Activated CD4-positive, alpha-beta T cell treated with anti-CD3 and anti-CD28 coated beads for 36 hours (primary cell): ENCODE measurements at regions of chr10 and their contacts with region 1.

Region 1: DNA sequence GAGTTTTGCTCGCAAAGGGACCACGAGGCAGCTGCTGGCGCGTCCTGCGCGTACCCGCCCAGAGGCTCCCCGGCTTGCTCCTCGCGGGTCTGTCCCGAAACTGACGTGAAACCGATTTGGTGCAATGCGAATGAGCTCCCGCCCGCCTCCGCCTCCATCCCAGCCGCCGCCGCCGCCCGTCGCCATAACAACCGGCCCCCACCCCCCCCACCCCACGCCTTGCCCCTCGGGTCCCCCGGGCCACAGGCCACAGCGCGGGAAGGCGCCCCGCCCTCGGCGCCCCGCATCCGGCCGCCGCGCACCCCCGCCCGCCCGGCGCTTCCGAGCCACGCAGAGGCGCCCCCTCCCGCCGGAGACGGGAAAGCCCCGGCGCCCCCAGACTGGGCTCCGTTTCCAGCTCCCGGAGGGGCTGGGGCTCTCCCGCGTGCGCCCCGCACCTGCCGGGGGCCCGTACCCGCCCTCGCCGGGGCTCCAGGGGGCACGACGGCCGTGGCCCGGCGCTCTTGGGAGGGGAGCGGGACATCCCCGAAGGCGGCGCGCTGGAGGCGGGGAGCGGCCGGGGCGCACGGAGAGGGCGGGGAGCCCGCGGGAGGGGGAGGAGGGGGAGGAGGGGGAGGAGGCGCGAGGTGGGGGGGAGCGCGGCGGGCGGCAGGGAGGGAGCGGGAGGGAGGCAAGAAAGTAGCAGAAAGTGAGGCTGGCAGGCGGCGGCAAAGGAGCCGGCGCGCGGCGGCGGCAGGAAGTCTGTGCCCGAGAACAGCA is at the start of gene CAMK1D:
- DNase-seq: peak; percentile 92
- ATAC-seq: peak; percentile 56
- H3K4me3 Mint-ChIP-seq: peak within 1 kb of the TSS; percentile 90
- H3K27ac Mint-ChIP-seq: peak within 1 kb of the TSS; percentile 95
- H3K4me1 Mint-ChIP-seq: peaks cover 42% of the 10 kb centered on the region
- H3K27me3 Mint-ChIP-seq: peaks cover 4% of the 10 kb centered on the region
- total RNA-seq, gene CAMK1D: 16.0 to 16.3 TPM

Region 2: GRCh38 chr10:12121673-12122072 is 227.4 kb before region 1 on chr10:
- CTCF ChIA-PET with region 1: no interaction called
- POLR2A ChIA-PET with region 1: no interaction called
- intact Hi-C with region 1: loop called in 1 of 2 experiments (anchors 5 kb)
- DNase-seq: no peak
- ATAC-seq: no peak
- H3K4me3 Mint-ChIP-seq: peak overlapping the region; percentile 54
- H3K27ac Mint-ChIP-seq: peak overlapping the region; percentile 94
- H3K4me1 Mint-ChIP-seq: peaks cover 32% of the 10 kb centered on the region
- H3K27me3 Mint-ChIP-seq: no peaks in the 10 kb centered on the region

Region 3: DNA sequence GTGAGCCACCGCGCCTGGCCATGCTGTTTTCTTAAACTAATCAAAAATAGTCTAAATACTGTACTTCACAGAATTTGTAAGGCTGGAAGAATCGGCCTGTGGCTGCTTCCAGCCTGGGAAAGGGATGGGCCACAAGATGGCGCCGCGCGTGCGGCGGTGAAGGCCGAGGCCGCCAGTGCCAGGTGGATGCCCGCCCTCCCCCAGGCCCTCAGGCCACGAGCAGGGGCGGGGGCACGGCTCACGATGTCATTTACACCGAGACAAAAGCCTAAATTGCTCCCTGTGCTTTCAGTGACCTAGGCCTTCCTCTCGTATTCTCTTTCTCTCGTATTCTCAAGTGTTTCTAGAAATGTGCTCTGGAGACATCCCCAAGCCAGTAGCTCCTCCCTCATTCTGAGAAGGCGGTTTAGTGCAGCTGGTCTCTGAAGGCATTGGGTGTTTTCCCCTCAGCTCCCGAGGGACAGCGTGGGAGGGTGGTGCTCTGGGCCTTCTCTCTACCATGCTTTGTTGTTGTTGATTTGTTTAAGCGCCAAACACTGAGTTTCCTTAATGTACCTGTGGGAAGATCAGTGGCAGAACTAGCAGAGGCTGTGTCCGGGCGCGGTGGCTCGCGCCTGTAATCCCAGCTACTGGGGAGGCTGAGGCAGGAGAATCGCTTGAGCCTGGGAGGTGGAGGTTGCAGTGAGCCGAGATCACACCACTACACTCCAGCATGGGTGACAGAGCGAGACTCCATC is 84.7 kb before region 1 on chr10:
- CTCF ChIA-PET with region 1: no interaction called
- POLR2A ChIA-PET with region 1: no interaction called
- intact Hi-C with region 1: loop called (anchors 1 to 2 kb)
- DNase-seq: peak; percentile 88
- ATAC-seq: peak; percentile 93
- H3K4me3 Mint-ChIP-seq: peak overlapping the region; percentile 42
- H3K27ac Mint-ChIP-seq: peak overlapping the region; percentile 83
- H3K4me1 Mint-ChIP-seq: peaks cover 17% of the 10 kb centered on the region
- H3K27me3 Mint-ChIP-seq: no peaks in the 10 kb centered on the region

Region 4: GRCh38 chr10:12319076-12319475 is 30.0 kb before region 1 on chr10:
- CTCF ChIA-PET with region 1: no interaction called
- POLR2A ChIA-PET with region 1: no interaction called
- intact Hi-C with region 1: no loop called
- DNase-seq: no peak
- ATAC-seq: no peak
- H3K4me3 Mint-ChIP-seq: no peak overlapping the region
- H3K27ac Mint-ChIP-seq: no peak overlapping the region
- H3K4me1 Mint-ChIP-seq: peaks cover 5% of the 10 kb centered on the region
- H3K27me3 Mint-ChIP-seq: no peaks in the 10 kb centered on the region

Region 5: GRCh38 chr10:12381536-12382156 is 32.6 kb after region 1 on chr10:
- CTCF ChIA-PET with region 1: no interaction called
- POLR2A ChIA-PET with region 1: no interaction called
- intact Hi-C with region 1: loop called in 1 of 2 experiments (anchors 1 kb)
- DNase-seq: no peak
- ATAC-seq: peak; percentile 73
- H3K4me3 Mint-ChIP-seq: no peak overlapping the region
- H3K27ac Mint-ChIP-seq: peak overlapping the region; percentile 86
- H3K4me1 Mint-ChIP-seq: peaks cover 33% of the 10 kb centered on the region
- H3K27me3 Mint-ChIP-seq: no peaks in the 10 kb centered on the region

Region 6: GRCh38 chr10:12448729-12449391 is 99.8 kb after region 1 on chr10:
- CTCF ChIA-PET with region 1: no interaction called
- POLR2A ChIA-PET with region 1: no interaction called
- intact Hi-C with region 1: loop called (anchors 1 kb)
- DNase-seq: peak; percentile 86
- ATAC-seq: peak; percentile 94
- H3K4me3 Mint-ChIP-seq: peak overlapping the region; percentile 68
- H3K27ac Mint-ChIP-seq: peak overlapping the region; percentile 92
- H3K4me1 Mint-ChIP-seq: peaks cover 43% of the 10 kb centered on the region
- H3K27me3 Mint-ChIP-seq: no peaks in the 10 kb centered on the region

Region 7: DNA sequence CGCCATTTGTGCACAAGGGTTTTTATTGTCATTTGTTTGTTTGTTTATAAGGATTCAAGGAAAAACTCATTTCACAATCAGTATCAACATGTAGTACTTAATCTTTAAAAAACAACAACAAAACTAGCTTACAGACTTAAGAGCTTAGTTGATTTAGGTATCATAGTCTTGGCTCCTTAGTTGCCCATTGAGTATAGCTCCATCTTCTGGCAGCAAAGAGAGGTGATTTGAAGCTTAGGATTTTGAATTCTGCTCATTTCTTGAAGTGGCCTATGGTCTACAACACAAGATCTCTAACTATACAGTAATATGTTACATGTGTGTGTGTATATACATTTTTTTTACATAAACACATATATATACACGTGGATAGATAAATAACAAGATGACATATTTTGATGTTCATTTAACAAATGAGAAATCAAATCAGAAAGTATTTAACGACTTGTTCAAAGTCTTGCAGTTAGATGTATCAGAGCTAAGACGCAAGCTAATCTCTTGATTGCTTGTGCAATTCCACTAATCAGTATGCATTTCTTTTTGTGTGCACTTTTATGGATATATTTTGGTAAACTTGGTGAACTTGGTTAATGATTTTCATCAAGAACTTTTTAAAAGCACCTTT is 307.6 kb after region 1 on chr10:
- CTCF ChIA-PET with region 1: interaction called, 5 read pairs
- POLR2A ChIA-PET with region 1: no interaction called
- intact Hi-C with region 1: loop called in 1 of 2 experiments (anchors 1 kb)
- DNase-seq: no peak
- ATAC-seq: peak; percentile 75
- H3K4me3 Mint-ChIP-seq: no peak overlapping the region
- H3K27ac Mint-ChIP-seq: no peak overlapping the region
- H3K4me1 Mint-ChIP-seq: peaks cover 27% of the 10 kb centered on the region
- H3K27me3 Mint-ChIP-seq: no peaks in the 10 kb centered on the region

Region 8: DNA sequence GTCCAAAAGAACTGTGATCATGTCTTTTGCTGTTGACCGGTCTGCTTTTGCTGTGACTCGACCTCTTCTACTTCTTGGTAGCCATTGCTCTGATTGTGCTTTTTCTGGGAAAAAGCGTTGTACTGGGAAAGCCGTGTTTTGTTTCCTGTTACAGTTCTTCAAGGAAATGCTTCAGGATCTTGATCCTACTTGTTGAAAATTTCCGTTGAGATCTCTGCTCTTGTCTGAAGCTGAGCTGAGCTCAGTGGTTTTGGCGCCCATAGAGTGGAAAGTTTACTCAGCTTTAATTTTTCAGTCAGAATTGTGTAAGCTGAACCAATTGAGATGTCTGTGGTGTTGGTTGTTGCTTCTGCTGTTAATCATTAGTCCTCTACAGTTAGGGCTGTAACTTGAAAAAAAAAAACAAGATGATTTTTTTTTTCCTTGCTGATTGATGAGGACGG is 350.2 kb after region 1 on chr10:
- CTCF ChIA-PET with region 1: no interaction called
- POLR2A ChIA-PET with region 1: no interaction called
- intact Hi-C with region 1: no loop called
- DNase-seq: peak; percentile 56
- ATAC-seq: peak; percentile 78
- H3K4me3 Mint-ChIP-seq: no peak overlapping the region
- H3K27ac Mint-ChIP-seq: peak overlapping the region; percentile 80
- H3K4me1 Mint-ChIP-seq: peaks cover 43% of the 10 kb centered on the region
- H3K27me3 Mint-ChIP-seq: no peaks in the 10 kb centered on the region

Region 9: DNA sequence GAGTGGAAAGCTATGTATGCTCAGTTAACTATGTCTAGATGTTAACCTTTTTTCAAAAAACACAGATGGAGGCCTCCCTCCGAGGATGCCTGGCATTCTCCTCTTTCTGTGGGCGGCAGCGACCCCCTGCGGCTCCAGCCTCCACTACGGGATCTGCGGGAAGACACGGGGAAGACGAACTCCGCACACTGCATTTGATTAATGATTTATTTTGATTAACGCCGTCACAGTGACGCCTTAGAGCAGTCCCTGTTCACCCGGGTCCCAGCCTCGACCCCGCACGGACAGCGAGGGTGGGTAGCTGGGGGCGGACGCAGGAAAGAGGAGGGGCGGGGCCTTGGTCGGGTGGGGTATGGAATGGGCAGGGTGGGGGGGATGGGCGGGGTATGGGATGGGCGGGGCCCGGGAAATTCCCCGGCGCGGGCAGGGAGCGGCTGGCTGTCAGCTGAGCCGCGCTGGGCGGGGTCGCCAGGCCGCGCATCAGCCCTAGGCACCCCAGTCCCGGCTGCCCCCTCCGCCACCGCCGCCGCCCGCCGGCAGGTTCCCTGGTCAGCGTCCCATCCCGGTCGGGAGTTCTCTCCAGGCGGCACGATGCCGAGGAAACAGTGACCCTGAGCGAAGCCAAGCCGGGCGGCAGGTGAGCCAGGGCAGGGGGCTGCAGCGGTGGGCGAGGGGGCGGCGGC is 750.8 kb after region 1 on chr10 and contains the start of gene OPTN:
- CTCF ChIA-PET with region 1: no interaction called
- POLR2A ChIA-PET with region 1: no interaction called
- intact Hi-C with region 1: loop called in 1 of 2 experiments (anchors 1 kb)
- DNase-seq: peak; percentile 87
- ATAC-seq: peak; percentile 80
- H3K4me3 Mint-ChIP-seq: peak within 1 kb of the TSS; percentile 84
- H3K27ac Mint-ChIP-seq: peak within 1 kb of the TSS; percentile 90
- H3K4me1 Mint-ChIP-seq: peaks cover 37% of the 10 kb centered on the region
- H3K27me3 Mint-ChIP-seq: no peaks in the 10 kb centered on the region
- total RNA-seq, gene OPTN: 57.4 to 67.8 TPM